ENCODE measurements at regions of chr19 and their contacts with region 1.

Region 1: DNA sequence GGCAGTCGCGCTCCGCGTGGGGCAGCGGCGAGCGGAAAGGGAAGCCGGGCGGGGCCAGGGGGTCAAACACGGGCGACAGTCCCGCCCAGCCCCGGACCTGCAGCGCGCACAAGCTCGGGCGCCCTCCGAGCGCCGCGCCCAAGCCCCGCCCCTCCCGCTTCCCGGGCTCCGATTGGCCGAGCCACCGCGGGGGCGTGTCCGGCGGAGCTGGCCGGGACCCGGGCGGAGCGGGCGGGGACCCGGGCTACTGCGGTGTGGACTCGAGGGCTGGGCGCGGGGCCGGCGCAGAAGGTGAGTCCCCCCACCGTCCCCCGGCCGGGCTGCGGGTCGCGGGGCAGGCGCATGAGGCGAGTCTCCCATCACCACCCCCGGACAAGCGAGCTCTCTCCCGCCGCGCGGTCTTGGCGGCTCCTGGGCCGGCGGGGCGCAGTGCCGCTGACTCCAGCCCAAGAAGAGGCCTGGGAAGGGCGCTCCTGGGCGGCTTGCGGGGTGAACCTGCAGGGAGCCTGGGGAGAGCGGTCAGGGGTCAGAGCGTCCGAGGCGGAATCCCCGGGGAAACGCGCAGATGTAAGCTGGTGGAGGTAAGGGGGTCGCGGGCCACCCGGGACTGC is at the start of gene PLEKHF1:
- DNase-seq: peak; percentile 92
- H3K4me3 Mint-ChIP-seq: peak within 1 kb of the TSS; percentile 95
- H3K27ac Mint-ChIP-seq: peak within 1 kb of the TSS; percentile 85
- H3K4me1 Mint-ChIP-seq: peaks cover 68% of the 10 kb centered on the region
- H3K27me3 Mint-ChIP-seq: no peaks in the 10 kb centered on the region
- total RNA-seq, gene PLEKHF1: 30.9 and 35.0 TPM in 2 replicates

Region 2: DNA sequence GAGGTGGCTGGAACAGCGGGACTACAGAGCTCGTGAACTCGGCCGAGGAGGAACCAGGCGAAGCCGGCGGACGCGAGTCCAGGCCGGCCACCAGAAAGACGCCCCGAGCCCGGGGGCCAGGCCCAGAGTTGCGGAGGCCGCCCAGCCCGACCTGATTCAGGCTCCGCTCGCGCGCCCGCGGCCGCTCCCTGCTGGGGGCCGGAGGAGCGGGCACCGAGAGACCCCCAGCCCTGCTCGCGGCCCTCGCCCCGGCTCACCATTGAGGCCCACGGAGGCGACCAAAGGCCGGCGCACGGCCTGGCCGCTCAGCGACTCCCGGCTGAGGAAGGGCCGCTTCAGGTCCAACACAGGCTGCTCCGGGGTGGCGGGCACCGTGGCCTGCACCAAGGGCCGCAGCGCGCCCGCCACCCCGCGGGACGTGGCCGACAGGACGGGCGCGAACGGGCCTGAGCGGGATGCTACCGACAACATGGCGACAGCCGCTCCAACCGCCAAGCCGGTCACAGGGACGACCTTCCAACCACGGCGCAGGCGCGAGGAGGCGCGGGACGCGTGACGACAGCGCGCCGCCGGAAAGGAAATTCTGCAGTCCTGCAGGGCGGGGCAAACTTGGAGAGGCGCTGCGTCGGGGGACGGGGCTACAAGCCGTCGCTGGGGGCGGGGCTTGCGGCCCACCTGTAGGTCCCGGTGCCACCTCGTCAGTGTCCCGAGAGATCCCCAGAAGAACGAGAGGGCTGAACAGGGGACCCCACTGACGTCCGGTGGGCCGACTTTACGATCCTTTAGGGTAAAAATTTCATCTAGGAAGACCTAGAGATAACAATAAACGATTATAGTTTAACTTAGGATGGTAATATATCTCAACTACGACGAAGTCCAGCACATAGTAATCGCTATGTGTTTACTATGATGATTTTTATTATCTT is 452.4 kb before region 1 on chr19 and contains the start of gene UQCRFS1:
- intact Hi-C with region 1: loop called (anchors 5 kb)
- DNase-seq: peak; percentile 97
- H3K4me3 Mint-ChIP-seq: peak within 1 kb of the TSS; percentile 95
- H3K27ac Mint-ChIP-seq: peak within 1 kb of the TSS; percentile 93
- H3K4me1 Mint-ChIP-seq: peaks cover 39% of the 10 kb centered on the region
- H3K27me3 Mint-ChIP-seq: peaks cover 2% of the 10 kb centered on the region
- total RNA-seq, gene UQCRFS1: 40.3 and 43.6 TPM in 2 replicates

Region 3: GRCh38 chr19:29651622-29652394 is 13.5 kb before region 1 on chr19:
- intact Hi-C with region 1: no loop called
- DNase-seq: no peak
- H3K4me3 Mint-ChIP-seq: no peak overlapping the region
- H3K27ac Mint-ChIP-seq: no peak overlapping the region
- H3K4me1 Mint-ChIP-seq: peaks cover 23% of the 10 kb centered on the region
- H3K27me3 Mint-ChIP-seq: peaks cover 18% of the 10 kb centered on the region

Region 4: DNA sequence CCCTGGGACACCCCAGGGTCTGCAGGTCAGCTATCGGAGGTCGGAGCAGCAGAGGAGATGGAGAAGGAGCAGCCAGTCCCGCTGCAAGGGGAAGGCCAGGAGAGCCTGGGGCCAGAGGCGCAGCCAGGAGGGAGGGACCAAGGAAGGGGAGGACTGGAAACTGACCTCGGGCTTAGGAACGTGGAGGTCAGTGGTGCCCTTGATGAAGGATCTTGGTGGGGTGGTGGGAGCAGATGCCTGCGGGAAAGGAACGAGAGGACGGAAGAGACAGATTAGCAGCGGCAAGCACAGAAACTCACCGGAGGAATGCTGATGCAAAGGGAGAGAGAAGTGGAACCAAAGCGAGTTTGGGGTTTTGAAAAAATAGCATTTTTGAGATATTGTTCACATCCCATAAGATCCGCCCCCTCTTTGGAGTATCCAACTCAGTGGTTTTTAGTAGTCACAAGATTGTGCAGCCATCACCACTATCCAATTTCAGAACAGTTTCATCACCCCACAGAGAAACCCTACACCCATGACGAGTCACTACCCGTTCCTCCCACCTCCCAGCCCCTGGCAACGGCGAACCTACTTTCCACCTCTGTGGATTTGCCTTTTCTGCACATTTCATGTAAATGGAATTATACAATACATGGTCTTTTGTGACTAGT is 22.1 kb after region 1 on chr19:
- intact Hi-C with region 1: loop called (anchors 1 kb)
- DNase-seq: no peak
- H3K4me3 Mint-ChIP-seq: peak overlapping the region; percentile 32
- H3K27ac Mint-ChIP-seq: peak overlapping the region; percentile 78
- H3K4me1 Mint-ChIP-seq: peaks cover 55% of the 10 kb centered on the region
- H3K27me3 Mint-ChIP-seq: no peaks in the 10 kb centered on the region

Region 5: GRCh38 chr19:29714953-29715700 is 49.8 kb after region 1 on chr19 and contains the start of gene C19orf12:
- intact Hi-C with region 1: loop called (anchors 1 kb)
- DNase-seq: peak; percentile 66
- H3K4me3 Mint-ChIP-seq: peak within 1 kb of the TSS; percentile 94
- H3K27ac Mint-ChIP-seq: peak within 1 kb of the TSS; percentile 98
- H3K4me1 Mint-ChIP-seq: peaks cover 57% of the 10 kb centered on the region
- H3K27me3 Mint-ChIP-seq: no peaks in the 10 kb centered on the region
- total RNA-seq, gene C19orf12: 47.9 and 50.2 TPM in 2 replicates

Region 6: GRCh38 chr19:29844891-29845572 is 179.7 kb after region 1 on chr19:
- intact Hi-C with region 1: loop called (anchors 1 kb)
- DNase-seq: peak; percentile 93
- H3K4me3 Mint-ChIP-seq: peak overlapping the region; percentile 84
- H3K27ac Mint-ChIP-seq: peak overlapping the region; percentile 80
- H3K4me1 Mint-ChIP-seq: peaks cover 30% of the 10 kb centered on the region
- H3K27me3 Mint-ChIP-seq: peaks cover 4% of the 10 kb centered on the region

Measured in activated T-helper 1 cell treated with anti-CD3 and anti-CD28 coated beads, Interleukin-12 subunit alpha, Interleukin-12 subunit beta, Interleukin-2, Interleukin-4 antibody, amounts not matched to agents 30 ng/mL and 10 ng/mL and 1 ng/mL, durations not matched to agents 14 hours and 24 hours and 36 hours (primary cell).